A673 (cell line): ENCODE measurements at regions of chr11 and their contacts with region 1.

Region 1: GRCh38 chr11:6531267-6531752 is 34.2 kb downstream of the DNHD1 start:
- DNase-seq: peak; percentile 54
- H3K4me3 ChIP-seq: no peak overlapping the region
- H3K27ac ChIP-seq: no peak overlapping the region
- H3K4me1 ChIP-seq: no peaks in the 10 kb centered on the region
- H3K27me3 ChIP-seq: no peaks in the 10 kb centered on the region
- CTCF ChIP-seq: peak; percentile 78

Region 2: DNA sequence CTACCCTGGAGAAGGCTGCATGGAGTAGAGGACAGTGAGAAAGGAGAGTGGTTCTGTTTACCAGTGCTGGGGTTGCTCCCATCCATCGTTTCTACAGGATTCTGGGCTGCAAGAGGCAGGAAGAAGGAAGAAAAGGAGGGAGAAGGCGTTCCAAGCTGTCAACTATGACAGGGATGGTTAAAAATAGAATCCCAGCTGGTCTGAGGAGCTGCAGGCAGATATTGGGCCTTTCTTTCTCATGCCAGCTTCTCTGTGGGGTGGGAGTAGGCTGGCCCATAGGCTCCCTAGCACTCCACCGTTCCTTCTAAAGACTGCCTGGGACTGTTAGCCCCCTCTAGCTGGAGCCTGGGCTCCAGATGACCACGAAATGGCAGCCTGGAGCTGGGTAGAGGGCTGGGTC is 258.1 kb before region 1 on chr11:
- CTCF ChIA-PET with region 1: no interaction called
- POLR2A ChIA-PET with region 1: no interaction called
- intact Hi-C with region 1: no loop called
- DNase-seq: no peak
- H3K4me3 ChIP-seq: no peak overlapping the region
- H3K27ac ChIP-seq: no peak overlapping the region
- H3K4me1 ChIP-seq: no peaks in the 10 kb centered on the region
- H3K27me3 ChIP-seq: no peaks in the 10 kb centered on the region
- CTCF ChIP-seq: no peak

Region 3: DNA sequence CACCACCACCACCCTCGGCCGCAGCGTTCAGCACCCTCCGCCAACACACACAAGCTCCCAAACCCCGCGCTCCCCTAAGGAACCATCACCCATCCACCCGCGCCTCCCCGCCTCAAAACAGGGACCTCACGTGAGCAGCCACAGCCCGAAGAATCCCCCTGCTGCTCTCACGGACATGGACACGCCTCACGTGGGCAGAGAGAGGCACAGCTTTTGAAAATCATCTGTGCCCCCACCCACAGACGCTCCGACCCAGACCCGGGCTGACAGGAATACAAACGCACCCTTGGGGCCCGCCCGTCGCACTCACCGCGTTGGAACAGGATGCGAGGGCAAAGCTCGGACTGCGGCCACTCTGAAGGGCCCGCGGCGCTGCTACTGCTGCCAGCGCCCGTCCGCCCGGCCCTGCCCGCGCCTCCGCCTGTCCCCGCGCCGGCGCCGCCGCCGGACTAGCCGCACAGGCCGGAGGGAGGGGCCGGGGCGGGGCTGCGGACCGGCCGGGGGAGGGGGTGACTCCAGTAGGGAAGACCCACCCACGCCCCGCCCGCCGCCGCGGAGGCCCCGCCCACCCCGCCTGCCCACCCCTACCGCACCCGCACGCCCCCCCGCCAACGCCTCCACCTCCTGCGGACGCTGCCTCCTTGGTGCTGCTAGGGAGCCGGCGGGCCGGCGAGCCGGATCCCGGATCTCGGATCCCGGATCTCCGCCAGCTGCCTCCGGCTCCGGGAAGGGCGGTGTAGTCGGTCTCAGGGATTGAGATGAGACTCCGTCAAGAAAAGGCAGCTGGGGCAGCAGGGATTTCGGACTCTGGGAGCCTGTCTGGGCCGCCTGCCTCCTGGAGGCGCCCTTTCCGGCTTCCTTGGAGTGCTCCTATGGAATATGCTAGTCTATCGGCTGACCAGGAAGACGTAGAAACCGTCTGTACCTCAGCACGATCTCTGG is 57.6 kb before region 1 on chr11 and contains the start of gene TRIM3:
- CTCF ChIA-PET with region 1: no interaction called
- POLR2A ChIA-PET with region 1: no interaction called
- intact Hi-C with region 1: no loop called
- DNase-seq: peak; percentile 88
- H3K4me3 ChIP-seq: peak within 1 kb of the TSS; percentile 82
- H3K27ac ChIP-seq: peak within 1 kb of the TSS; percentile 86
- H3K4me1 ChIP-seq: peaks cover 25% of the 10 kb centered on the region
- H3K27me3 ChIP-seq: no peaks in the 10 kb centered on the region
- CTCF ChIP-seq: peak; percentile 46
- total RNA-seq, gene TRIM3: 34.2 and 37.1 TPM in 2 replicates

Region 4: DNA sequence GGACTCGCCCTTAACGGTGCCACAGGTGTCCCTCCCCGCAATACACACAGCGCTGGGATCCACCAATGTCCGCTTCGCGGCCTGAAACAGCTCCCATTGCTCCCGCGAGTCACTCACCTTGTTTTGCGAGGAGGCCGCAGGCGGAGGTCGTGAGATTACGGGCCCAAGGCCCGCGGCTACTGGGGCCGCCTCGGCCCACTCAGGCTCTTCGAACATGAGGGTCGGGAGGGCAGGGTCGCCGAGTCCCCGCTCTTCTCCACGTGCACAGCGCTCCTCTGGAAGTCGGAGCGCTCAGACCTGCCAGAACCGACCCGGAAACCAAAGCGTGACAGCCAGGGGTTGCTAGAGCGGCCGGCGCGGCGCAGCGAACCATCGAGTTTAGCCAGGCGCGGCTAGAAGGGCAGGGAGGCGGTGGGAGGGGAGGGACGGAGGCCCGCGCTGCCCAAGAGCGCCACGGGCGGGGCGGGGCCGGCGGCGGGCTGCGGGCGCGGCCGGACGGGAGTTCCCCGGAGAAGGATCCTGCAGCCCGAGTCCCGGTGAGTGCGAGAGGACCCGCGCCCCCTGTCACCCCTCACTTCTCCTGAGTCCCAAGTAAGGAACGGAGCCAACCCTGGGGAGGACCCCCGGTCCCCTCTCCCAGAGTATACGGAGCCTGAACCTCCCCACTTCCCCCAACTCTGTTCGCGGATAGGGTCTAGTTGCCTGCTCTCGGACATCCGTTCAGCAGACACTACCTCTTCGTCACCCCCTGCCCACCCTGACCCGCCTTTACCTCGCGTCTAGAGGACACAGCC is 72.2 kb after region 1 on chr11 and contains the starts of genes ILK and RRP8:
- CTCF ChIA-PET with region 1: interaction called, 3 read pairs
- POLR2A ChIA-PET with region 1: no interaction called
- intact Hi-C with region 1: loop called (anchors 5 kb)
- DNase-seq: peak; percentile 91
- H3K4me3 ChIP-seq: peak within 1 kb of the TSS; percentile 74
- H3K27ac ChIP-seq: peak within 1 kb of the TSS; percentile 78
- H3K4me1 ChIP-seq: peaks cover 10% of the 10 kb centered on the region
- H3K27me3 ChIP-seq: no peaks in the 10 kb centered on the region
- CTCF ChIP-seq: no peak
- total RNA-seq, gene ILK: 85.2 and 86.5 TPM in 2 replicates
- total RNA-seq, gene RRP8: 19.1 and 21.6 TPM in 2 replicates

Region 5: GRCh38 chr11:6667733-6668374 is 136.5 kb after region 1 on chr11:
- CTCF ChIA-PET with region 1: interaction called, 10 read pairs
- POLR2A ChIA-PET with region 1: interaction called, 3 read pairs
- intact Hi-C with region 1: no loop called
- DNase-seq: peak; percentile 72
- H3K4me3 ChIP-seq: no peak overlapping the region
- H3K27ac ChIP-seq: no peak overlapping the region
- H3K4me1 ChIP-seq: no peaks in the 10 kb centered on the region
- H3K27me3 ChIP-seq: no peaks in the 10 kb centered on the region
- CTCF ChIP-seq: peak; percentile 65

Region 6: GRCh38 chr11:6682936-6683861 is 151.9 kb after region 1 on chr11 and contains the start of gene MRPL17:
- CTCF ChIA-PET with region 1: interaction called, 6 read pairs
- POLR2A ChIA-PET with region 1: no interaction called
- intact Hi-C with region 1: loop called (anchors 1 kb)
- DNase-seq: peak; percentile 99
- H3K4me3 ChIP-seq: peak within 1 kb of the TSS; percentile 100
- H3K27ac ChIP-seq: peak within 1 kb of the TSS; percentile 92
- H3K4me1 ChIP-seq: peaks cover 4% of the 10 kb centered on the region
- H3K27me3 ChIP-seq: no peaks in the 10 kb centered on the region
- CTCF ChIP-seq: peak; percentile 94
- total RNA-seq, gene MRPL17: 82.5 and 98.5 TPM in 2 replicates

Region 7: GRCh38 chr11:6693342-6694228 is 162.3 kb after region 1 on chr11:
- CTCF ChIA-PET with region 1: interaction called, 18 read pairs
- POLR2A ChIA-PET with region 1: no interaction called
- intact Hi-C with region 1: no loop called
- DNase-seq: peak; percentile 87
- H3K4me3 ChIP-seq: no peak overlapping the region
- H3K27ac ChIP-seq: peak overlapping the region; percentile 30
- H3K4me1 ChIP-seq: peaks cover 5% of the 10 kb centered on the region
- H3K27me3 ChIP-seq: no peaks in the 10 kb centered on the region
- CTCF ChIP-seq: no peak

Region 8: DNA sequence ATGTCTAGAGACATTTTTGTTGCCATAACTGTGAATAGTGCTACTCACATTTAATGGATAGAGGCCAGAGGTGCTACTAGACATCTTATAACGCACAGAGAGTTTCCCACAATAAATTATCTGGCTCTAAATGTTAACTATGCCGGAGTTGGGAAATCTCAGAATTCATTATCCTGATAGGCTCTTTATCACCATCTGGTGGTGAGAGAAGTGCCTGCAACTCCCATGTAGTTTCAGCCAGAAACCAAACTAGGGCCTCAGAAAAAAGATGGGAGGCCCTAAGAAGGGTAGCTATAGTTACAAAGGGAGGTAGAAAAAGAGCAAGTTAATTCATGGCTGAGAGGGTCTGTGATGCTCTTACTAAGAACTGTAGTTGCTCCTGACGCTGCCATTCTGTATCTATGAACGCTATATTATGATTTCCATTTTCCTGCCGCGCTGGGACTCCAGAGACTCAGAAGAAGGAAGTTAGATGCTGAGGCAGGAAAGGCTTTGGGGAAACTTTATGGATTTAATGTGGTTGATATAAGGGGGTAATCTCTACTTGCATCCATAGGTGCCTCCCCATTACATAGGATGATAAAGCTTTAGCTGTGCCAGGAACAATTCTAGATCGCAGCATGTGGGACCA is 174.7 kb after region 1 on chr11:
- CTCF ChIA-PET with region 1: interaction called, 5 read pairs
- POLR2A ChIA-PET with region 1: no interaction called
- intact Hi-C with region 1: loop called (anchors 2 kb)
- DNase-seq: peak; percentile 77
- H3K4me3 ChIP-seq: no peak overlapping the region
- H3K27ac ChIP-seq: no peak overlapping the region
- H3K4me1 ChIP-seq: peaks cover 13% of the 10 kb centered on the region
- H3K27me3 ChIP-seq: no peaks in the 10 kb centered on the region
- CTCF ChIP-seq: peak; percentile 86